K562 (cell line): ENCODE measurements at regions of chr6 and their contacts with region 1.

Region 1: GRCh38 chr6:150290429-150290828 is 78.4 kb upstream of the IYD start:
- DNase-seq: no peak
- ATAC-seq: peak; percentile 22
- H3K4me3 ChIP-seq: no peak overlapping the region
- H3K27ac ChIP-seq: no peak overlapping the region
- H3K4me1 ChIP-seq: peaks cover 14 to 36% of the 10 kb centered on the region in 2 experiments; a peak in 4 of 5 replicates
- H3K27me3 ChIP-seq: no peaks in the 10 kb centered on the region
- CTCF ChIP-seq: no peak
- EP300 ChIP-seq: no peak
- POLR2A ChIP-seq: no peak
- RAD21 ChIP-seq: no peak

Region 2: GRCh38 chr6:150273457-150274309 is 16.7 kb before region 1 on chr6:
- CTCF ChIA-PET with region 1: no interaction called
- POLR2A ChIA-PET with region 1: interaction called, 11 read pairs
- in situ Hi-C with region 1: no loop called
- intact Hi-C with region 1: no loop called
- DNase-seq: peak in 1 of 4 experiments; percentile 59
- ATAC-seq: no peak
- H3K4me3 ChIP-seq: no peak overlapping the region
- H3K27ac ChIP-seq: peak overlapping the region; percentile 3; the same call in 2 of the 3 replicates
- H3K4me1 ChIP-seq: peaks cover 76 to 93% of the 10 kb centered on the region in 2 experiments
- H3K27me3 ChIP-seq: no peaks in the 10 kb centered on the region
- CTCF ChIP-seq: no peak
- EP300 ChIP-seq: peak; percentile 16; the same call in 1 of the 2 replicates
- POLR2A ChIP-seq: no peak
- RAD21 ChIP-seq: 0 out of 4 replicates have a peak, but pooled peaks of 1 of the 2 experiments have one; percentile 9

Region 3: DNA sequence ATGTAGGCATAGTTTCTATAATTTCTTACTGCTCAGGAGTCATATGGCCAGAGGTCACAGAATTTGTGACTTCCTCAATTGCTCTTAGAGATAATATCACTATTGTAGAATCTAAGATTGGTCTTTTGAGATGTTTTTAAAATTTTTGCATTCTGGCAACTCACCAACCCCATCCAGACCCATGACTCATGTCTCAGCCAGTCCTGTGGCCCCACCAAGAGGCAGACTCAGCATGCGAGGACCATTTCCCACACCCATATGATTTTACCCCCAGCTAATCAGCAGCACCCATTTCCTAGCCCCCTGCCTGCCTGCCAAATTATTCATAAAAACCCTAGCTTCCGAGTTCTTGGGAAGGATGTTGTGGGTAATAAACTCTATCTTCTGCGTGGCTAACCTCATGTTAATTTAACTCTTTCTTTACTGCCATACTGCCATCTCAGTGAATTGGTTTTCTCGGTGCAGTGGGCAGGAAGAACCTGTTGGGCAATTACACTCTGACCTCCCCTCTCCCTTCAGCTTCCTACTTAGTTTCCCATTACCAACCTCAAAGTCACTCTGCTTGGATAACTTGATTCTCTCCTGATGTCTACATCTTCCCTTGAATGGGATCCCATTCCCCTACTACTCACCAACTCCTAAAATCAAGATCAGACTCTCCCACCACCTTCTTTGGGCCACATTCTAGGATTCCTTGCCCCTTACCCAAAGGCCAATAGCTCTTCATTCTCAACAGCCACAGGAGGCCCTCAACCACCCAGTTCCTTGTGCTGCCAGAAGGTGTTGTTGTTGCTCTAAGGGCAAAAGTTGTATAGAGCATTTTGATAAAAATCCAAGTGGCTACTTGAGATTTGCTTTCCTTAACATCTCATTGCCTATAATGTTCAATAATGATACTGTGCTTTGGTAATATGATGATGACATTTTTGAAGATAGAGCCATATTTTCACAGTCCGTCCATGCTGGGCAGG is 62.2 kb after region 1 on chr6:
- CTCF ChIA-PET with region 1: no interaction called
- POLR2A ChIA-PET with region 1: no interaction called
- in situ Hi-C with region 1: no loop called
- intact Hi-C with region 1: no loop called
- DNase-seq: peak in 1 of 4 experiments; percentile 27
- ATAC-seq: peak; percentile 69
- H3K4me3 ChIP-seq: no peak overlapping the region
- H3K27ac ChIP-seq: no peak overlapping the region
- H3K4me1 ChIP-seq: no peaks in the 10 kb centered on the region; a peak in 1 of 5 replicates
- H3K27me3 ChIP-seq: peaks cover 7 to 11% of the 10 kb centered on the region in 2 experiments; a peak in 3 of 5 replicates
- CTCF ChIP-seq: peak; percentile 40 to 61 (median 41)
- EP300 ChIP-seq: no peak
- POLR2A ChIP-seq: no peak
- RAD21 ChIP-seq: peak; percentile 29 to 41; a peak in 3 of 4 replicates

Region 4: GRCh38 chr6:150368762-150369161 is 78.3 kb after region 1 on chr6 and contains the start of gene IYD:
- CTCF ChIA-PET with region 1: no interaction called
- POLR2A ChIA-PET with region 1: no interaction called
- in situ Hi-C with region 1: no loop called
- intact Hi-C with region 1: no loop called
- DNase-seq: no peak
- ATAC-seq: no peak
- H3K4me3 ChIP-seq: no peak within 1 kb of the TSS
- H3K27ac ChIP-seq: no peak within 1 kb of the TSS
- H3K4me1 ChIP-seq: no peaks in the 10 kb centered on the region; a peak in 1 of 5 replicates
- H3K27me3 ChIP-seq: peaks cover 22 to 43% of the 10 kb centered on the region in 2 experiments; a peak in 4 of 5 replicates
- CTCF ChIP-seq: no peak
- EP300 ChIP-seq: no peak
- POLR2A ChIP-seq: no peak
- RAD21 ChIP-seq: no peak
- polyA plus RNA-seq, gene IYD: not detected